Sigmoid colon (tissue), 7 donors: ENCODE measurements at regions of chr20 and their contacts with region 1.

Region 1: GRCh38 chr20:25294459-25295385 is 46.8 kb downstream of the PYGB start:
- DNase-seq: no peak
- H3K4me3 ChIP-seq: no peak overlapping the region
- H3K27ac ChIP-seq: peak overlapping the region; percentile 65 to 73 (median 68)
- H3K4me1 ChIP-seq: peaks cover 0 to 36% (median 34%) of the 10 kb centered on the region in 4 donors
- H3K27me3 ChIP-seq: no peaks in the 10 kb centered on the region
- CTCF ChIP-seq: peak; percentile 65 to 76 (median 71)
- EP300 ChIP-seq: no peak
- POLR2A ChIP-seq: no peak

Region 2: DNA sequence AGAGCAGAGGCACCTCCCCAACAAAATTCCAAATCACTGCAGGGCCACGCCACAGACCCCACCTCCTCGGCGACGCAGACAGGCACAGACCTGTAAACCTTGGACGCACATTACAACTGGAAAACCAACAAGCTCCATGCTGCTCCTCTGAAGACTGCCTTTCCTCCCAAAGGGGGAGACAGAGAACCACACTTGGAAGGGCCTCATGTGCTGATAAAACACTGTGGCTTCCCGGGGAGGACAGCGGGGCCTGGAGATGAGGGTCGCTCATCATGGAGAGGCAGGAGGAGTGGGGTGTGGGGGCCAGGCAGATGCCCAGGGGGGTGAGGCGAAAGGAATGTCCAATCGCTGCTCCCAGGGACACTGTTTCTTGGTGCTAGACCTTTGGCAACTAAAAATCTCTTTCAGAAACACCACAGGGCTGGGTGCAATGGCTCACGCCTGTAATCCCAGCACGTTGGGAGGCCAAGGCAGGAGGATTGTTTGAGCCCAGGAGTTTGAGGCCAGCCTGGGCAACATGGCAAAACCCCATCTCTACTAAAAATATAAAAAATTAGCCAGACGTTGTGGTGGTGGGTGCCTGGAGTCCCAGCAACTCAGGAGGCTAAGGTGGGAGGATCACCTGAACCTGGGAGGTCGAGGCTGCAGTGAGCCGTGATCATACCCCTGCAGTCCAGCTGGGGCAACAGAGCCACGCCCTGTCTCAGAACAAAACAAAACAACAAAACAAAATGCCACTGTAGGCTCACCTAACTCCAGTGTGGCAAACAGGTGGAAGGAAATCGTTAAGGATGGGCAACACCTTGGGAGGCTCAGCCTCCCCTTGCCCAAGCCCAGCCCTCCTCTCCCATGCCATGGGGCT is 42.1 kb after region 1 on chr20:
- intact Hi-C with region 1: no loop called
- DNase-seq: no peak
- H3K4me3 ChIP-seq: no peak overlapping the region
- H3K27ac ChIP-seq: no peak overlapping the region
- H3K4me1 ChIP-seq: no peaks in the 10 kb centered on the region
- H3K27me3 ChIP-seq: no peaks in the 10 kb centered on the region
- CTCF ChIP-seq: peak in 2 of 4 experiments; percentile 10 to 35
- EP300 ChIP-seq: no peak
- POLR2A ChIP-seq: no peak

Region 3: DNA sequence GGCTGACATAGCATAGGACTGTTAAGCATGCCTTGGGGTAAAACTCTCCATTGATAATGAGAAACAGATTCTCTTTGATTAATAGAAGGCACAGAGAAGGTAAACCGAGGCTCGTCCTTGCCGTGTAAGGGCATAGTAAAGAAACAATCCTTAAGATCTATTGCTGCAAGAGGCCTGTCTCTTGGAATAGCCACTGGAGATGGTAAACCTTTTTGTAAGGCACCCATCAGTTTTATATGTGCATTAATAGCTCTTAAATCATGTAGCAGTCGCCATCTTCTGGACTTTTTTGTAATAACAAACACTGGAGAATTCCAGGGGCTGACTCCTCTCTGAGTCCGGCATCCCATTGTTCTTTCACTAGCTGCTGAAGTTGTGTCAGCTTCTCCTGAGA is 104.3 kb after region 1 on chr20:
- intact Hi-C with region 1: loop called (anchors 2 kb)
- DNase-seq: no peak
- H3K4me3 ChIP-seq: no peak overlapping the region
- H3K27ac ChIP-seq: peak overlapping the region in 1 of 4 donors; percentile 39
- H3K4me1 ChIP-seq: peaks cover 0 to 8% (median 2%) of the 10 kb centered on the region in 4 donors
- H3K27me3 ChIP-seq: no peaks in the 10 kb centered on the region
- CTCF ChIP-seq: peak; percentile 35 to 62 (median 48)
- EP300 ChIP-seq: no peak
- POLR2A ChIP-seq: no peak